ENCODE measurements at regions of chr20 and their contacts with region 1.

Region 1: GRCh38 chr20:6767536-6768227 is at the start of gene BMP2:
- DNase-seq: peak in 1 of 2 experiments; percentile 78
- H3K4me3 ChIP-seq: peak within 1 kb of the TSS; percentile 55 to 79 (median 72)
- H3K27ac ChIP-seq: no peak within 1 kb of the TSS
- H3K4me1 ChIP-seq: peaks cover 5 to 22% (median 14%) of the 10 kb centered on the region in 4 experiments; a peak in 6 of 7 replicates
- H3K27me3 ChIP-seq: peaks cover 3 to 36% (median 26%) of the 10 kb centered on the region in 4 experiments
- CTCF ChIP-seq: no peak
- EP300 ChIP-seq: no peak
- POLR2A ChIP-seq: no peak
- RAD21 ChIP-seq: peak in 1 of 2 experiments; percentile 14; a peak in 1 of 4 replicates
- total RNA-seq, gene BMP2: 3.6 and 4.0 TPM in 2 replicates

Region 2: GRCh38 chr20:6636209-6637159 is 131.2 kb before region 1 on chr20:
- CTCF ChIA-PET with region 1: interaction called, 12 read pairs
- POLR2A ChIA-PET with region 1: no interaction called
- DNase-seq: no peak
- H3K4me3 ChIP-seq: no peak overlapping the region
- H3K27ac ChIP-seq: no peak overlapping the region
- H3K4me1 ChIP-seq: peaks cover 0 to 4% (median 1%) of the 10 kb centered on the region in 4 experiments; a peak in 2 of 7 replicates
- H3K27me3 ChIP-seq: no peaks in the 10 kb centered on the region
- CTCF ChIP-seq: peak in 2 of 3 experiments; percentile 55 to 66; a peak in 3 of 4 replicates
- EP300 ChIP-seq: no peak
- POLR2A ChIP-seq: no peak
- RAD21 ChIP-seq: peak; percentile 72 to 74

Region 3: GRCh38 chr20:6752946-6753345 is 14.7 kb before region 1 on chr20:
- CTCF ChIA-PET with region 1: interaction called, 13 read pairs
- POLR2A ChIA-PET with region 1: no interaction called
- DNase-seq: no peak
- H3K4me3 ChIP-seq: no peak overlapping the region
- H3K27ac ChIP-seq: no peak overlapping the region
- H3K4me1 ChIP-seq: no peaks in the 10 kb centered on the region; a peak in 1 of 7 replicates
- H3K27me3 ChIP-seq: no peaks in the 10 kb centered on the region
- CTCF ChIP-seq: no peak
- EP300 ChIP-seq: no peak
- POLR2A ChIP-seq: no peak
- RAD21 ChIP-seq: no peak

Region 4: DNA sequence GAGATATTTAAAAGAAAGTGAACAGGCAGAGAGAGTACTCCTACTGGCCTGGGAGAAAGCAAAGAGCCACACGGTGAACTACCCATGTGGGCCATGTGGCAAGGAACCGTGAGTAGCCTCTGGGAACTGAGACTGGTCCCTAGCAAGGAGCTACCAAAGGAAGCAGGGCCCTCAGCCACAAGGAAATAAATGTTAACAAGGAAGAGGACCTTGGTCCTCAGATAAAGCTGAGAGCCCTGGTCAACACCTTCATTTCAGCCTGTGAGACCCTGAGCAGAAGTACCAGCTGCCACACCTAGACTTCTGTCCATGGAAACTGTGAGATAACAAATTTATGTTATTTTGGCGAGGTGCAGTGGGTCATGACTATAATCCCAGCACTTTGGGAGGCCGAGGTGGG is 25.1 kb after region 1 on chr20:
- CTCF ChIA-PET with region 1: interaction called, 20 read pairs
- POLR2A ChIA-PET with region 1: interaction called, 5 read pairs
- DNase-seq: no peak
- H3K4me3 ChIP-seq: no peak overlapping the region
- H3K27ac ChIP-seq: no peak overlapping the region
- H3K4me1 ChIP-seq: no peaks in the 10 kb centered on the region
- H3K27me3 ChIP-seq: no peaks in the 10 kb centered on the region
- CTCF ChIP-seq: no peak
- EP300 ChIP-seq: no peak
- POLR2A ChIP-seq: no peak
- RAD21 ChIP-seq: no peak

Region 5: GRCh38 chr20:6828794-6829423 is 61.2 kb after region 1 on chr20:
- CTCF ChIA-PET with region 1: interaction called, 15 read pairs
- POLR2A ChIA-PET with region 1: interaction called, 3 read pairs
- DNase-seq: peak in 1 of 2 experiments; percentile 69
- H3K4me3 ChIP-seq: no peak overlapping the region
- H3K27ac ChIP-seq: no peak overlapping the region
- H3K4me1 ChIP-seq: no peaks in the 10 kb centered on the region
- H3K27me3 ChIP-seq: no peaks in the 10 kb centered on the region
- CTCF ChIP-seq: peak in 2 of 3 experiments; percentile 70 to 79; a peak in 3 of 4 replicates
- EP300 ChIP-seq: no peak
- POLR2A ChIP-seq: no peak
- RAD21 ChIP-seq: peak; percentile 71 to 81

Region 6: GRCh38 chr20:6855104-6855503 is 87.4 kb after region 1 on chr20:
- CTCF ChIA-PET with region 1: no interaction called
- POLR2A ChIA-PET with region 1: no interaction called
- DNase-seq: no peak
- H3K4me3 ChIP-seq: no peak overlapping the region
- H3K27ac ChIP-seq: no peak overlapping the region
- H3K4me1 ChIP-seq: no peaks in the 10 kb centered on the region
- H3K27me3 ChIP-seq: no peaks in the 10 kb centered on the region
- CTCF ChIP-seq: no peak
- EP300 ChIP-seq: no peak
- POLR2A ChIP-seq: no peak
- RAD21 ChIP-seq: no peak

Measured in H1 (cell line).